ENCODE measurements at regions of chr19 and their contacts with region 1.

Region 1: GRCh38 chr19:17522988-17523872 is 11.8 kb downstream of the PGLS start:
- DNase-seq: peak; percentile 79
- ATAC-seq: peak; percentile 77
- H3K4me3 Mint-ChIP-seq: peak overlapping the region; percentile 76
- H3K27ac Mint-ChIP-seq: peak overlapping the region; percentile 94
- H3K4me1 Mint-ChIP-seq: peaks cover 67% of the 10 kb centered on the region
- H3K27me3 Mint-ChIP-seq: no peaks in the 10 kb centered on the region
- CTCF ChIP-seq: no peak

Region 2: GRCh38 chr19:17511724-17512573 is 11.3 kb before region 1 on chr19:
- CTCF ChIA-PET with region 1: interaction called, 5 read pairs
- POLR2A ChIA-PET with region 1: interaction called, 347 read pairs
- intact Hi-C with region 1: loop called (anchors 1 kb)
- DNase-seq: peak; percentile 95
- ATAC-seq: peak; percentile 82
- H3K4me3 Mint-ChIP-seq: peak overlapping the region; percentile 100
- H3K27ac Mint-ChIP-seq: peak overlapping the region; percentile 98
- H3K4me1 Mint-ChIP-seq: peaks cover 50% of the 10 kb centered on the region
- H3K27me3 Mint-ChIP-seq: no peaks in the 10 kb centered on the region
- CTCF ChIP-seq: no peak

Region 3: DNA sequence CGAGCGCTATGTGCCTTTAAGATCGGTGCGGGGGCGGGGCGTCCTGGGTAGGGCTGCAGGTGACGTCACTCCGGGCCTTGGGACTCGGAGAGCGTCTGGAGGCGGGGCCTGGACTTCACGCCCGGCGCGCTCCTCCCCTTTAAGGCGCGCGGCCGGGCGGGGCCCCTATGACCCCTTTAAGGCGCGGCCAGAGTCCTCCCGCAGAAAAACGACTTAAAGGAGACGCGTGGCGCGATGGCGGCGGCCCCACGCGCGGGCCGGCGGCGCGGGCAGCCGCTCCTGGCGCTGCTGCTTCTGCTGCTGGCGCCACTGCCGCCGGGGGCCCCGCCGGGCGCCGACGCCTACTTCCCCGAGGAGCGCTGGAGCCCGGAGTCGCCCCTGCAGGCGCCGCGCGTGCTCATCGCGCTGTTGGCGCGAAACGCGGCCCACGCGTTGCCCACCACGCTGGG is 32.3 kb after region 1 on chr19 and contains the start of gene COLGALT1:
- CTCF ChIA-PET with region 1: interaction called, 4 read pairs
- POLR2A ChIA-PET with region 1: interaction called, 31 read pairs
- intact Hi-C with region 1: loop called (anchors 1 kb)
- DNase-seq: peak; percentile 94
- ATAC-seq: peak; percentile 93
- H3K4me3 Mint-ChIP-seq: peak within 1 kb of the TSS; percentile 84
- H3K27ac Mint-ChIP-seq: peak within 1 kb of the TSS; percentile 75
- H3K4me1 Mint-ChIP-seq: peaks cover 23% of the 10 kb centered on the region
- H3K27me3 Mint-ChIP-seq: no peaks in the 10 kb centered on the region
- CTCF ChIP-seq: no peak
- total RNA-seq, gene COLGALT1: 69.2 and 80.3 TPM in 2 replicates

Region 4: DNA sequence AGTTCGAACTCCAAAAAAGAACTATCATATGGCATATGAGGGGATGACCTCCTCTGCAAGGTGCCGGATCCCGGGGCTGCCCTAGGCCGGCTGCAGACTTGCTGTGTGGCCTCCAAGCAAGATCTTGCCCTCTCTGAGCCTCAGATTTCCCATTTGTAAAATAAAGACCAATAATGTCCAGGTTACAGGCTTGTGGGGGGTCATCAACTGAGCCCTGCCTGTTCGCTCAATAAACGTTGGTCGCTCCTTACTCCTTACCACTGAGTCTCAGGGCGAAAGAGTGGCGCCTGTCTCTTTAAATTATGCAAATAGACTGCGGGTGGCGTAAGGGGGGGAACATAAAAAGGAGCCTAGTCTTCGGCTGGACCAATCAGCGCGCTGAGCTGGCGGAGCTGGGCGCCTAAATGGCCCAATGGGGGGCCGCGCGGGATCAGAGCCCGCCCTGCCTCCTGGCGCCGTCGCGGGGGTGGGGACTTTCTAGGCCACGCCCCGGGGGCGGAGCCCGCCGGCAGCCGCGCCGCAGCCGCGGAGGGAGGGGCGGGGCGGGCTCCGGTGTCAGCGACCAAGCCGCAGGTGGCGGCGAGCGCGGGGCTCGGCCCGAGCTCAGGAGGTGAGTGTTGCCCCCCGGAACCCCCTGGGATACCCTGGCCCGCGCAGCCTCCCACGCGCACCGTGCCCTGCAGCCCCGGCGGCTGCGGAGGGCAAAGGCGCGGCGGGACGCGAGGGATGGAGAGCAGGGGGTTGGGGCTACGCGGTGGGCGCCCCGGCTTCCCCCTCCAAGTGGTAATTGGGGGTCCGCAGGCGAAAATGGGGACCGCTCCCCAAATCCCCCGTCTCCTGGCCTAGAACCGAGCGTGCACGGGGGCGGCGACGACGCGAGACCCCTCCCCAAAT is 224.2 kb after region 1 on chr19:
- CTCF ChIA-PET with region 1: no interaction called
- POLR2A ChIA-PET with region 1: interaction called, 11 read pairs
- intact Hi-C with region 1: no loop called
- DNase-seq: peak; percentile 97
- ATAC-seq: peak; percentile 83
- H3K4me3 Mint-ChIP-seq: peak overlapping the region; percentile 79
- H3K27ac Mint-ChIP-seq: peak overlapping the region; percentile 70
- H3K4me1 Mint-ChIP-seq: peaks cover 59% of the 10 kb centered on the region
- H3K27me3 Mint-ChIP-seq: no peaks in the 10 kb centered on the region
- CTCF ChIP-seq: no peak

Region 5: DNA sequence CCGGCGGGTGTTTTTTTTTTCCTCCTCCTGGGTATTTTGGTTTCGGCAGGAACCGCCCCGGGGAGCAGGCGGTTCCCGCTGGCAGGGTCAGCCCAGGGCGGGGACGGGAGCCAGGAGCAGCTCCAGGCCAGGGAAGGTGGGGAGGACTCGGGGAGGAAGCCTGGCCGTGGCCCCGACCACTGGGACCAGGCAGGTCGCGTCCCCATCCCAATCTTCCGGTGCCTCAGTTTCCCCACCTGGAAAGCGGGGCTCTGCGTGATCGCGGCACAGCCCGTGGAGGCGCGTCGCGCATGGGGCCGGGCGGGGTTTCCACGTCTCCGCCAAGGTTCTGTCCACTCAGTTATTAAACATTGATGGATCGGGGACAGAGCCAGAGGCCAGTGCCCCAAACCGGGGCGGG is 528.7 kb after region 1 on chr19:
- CTCF ChIA-PET with region 1: no interaction called
- POLR2A ChIA-PET with region 1: no interaction called
- intact Hi-C with region 1: no loop called
- DNase-seq: no peak
- ATAC-seq: no peak
- H3K4me3 Mint-ChIP-seq: no peak overlapping the region
- H3K27ac Mint-ChIP-seq: no peak overlapping the region
- H3K4me1 Mint-ChIP-seq: peaks cover 21% of the 10 kb centered on the region
- H3K27me3 Mint-ChIP-seq: no peaks in the 10 kb centered on the region
- CTCF ChIP-seq: no peak

Region 6: GRCh38 chr19:18173572-18174288 is 650.5 kb after region 1 on chr19 and contains the start of gene IFI30:
- CTCF ChIA-PET with region 1: no interaction called
- POLR2A ChIA-PET with region 1: no interaction called
- intact Hi-C with region 1: loop called (anchors 10 kb)
- DNase-seq: peak; percentile 85
- ATAC-seq: peak; percentile 62
- H3K4me3 Mint-ChIP-seq: peak within 1 kb of the TSS; percentile 94
- H3K27ac Mint-ChIP-seq: peak within 1 kb of the TSS; percentile 92
- H3K4me1 Mint-ChIP-seq: peaks cover 90% of the 10 kb centered on the region
- H3K27me3 Mint-ChIP-seq: no peaks in the 10 kb centered on the region
- CTCF ChIP-seq: no peak
- total RNA-seq, gene IFI30: 251 and 255 TPM in 2 replicates